PC-9 (cell line): ENCODE measurements at regions of chr11 and their contacts with region 1.

Region 1: GRCh38 chr11:34395916-34396550 is 38.2 kb upstream of the ABTB2 start:
- DNase-seq: peak; percentile 51 to 95
- H3K4me3 ChIP-seq: no peak overlapping the region
- H3K27ac ChIP-seq: peak overlapping the region; percentile 77
- H3K4me1 ChIP-seq: peaks cover 33% of the 10 kb centered on the region
- H3K27me3 ChIP-seq: no peaks in the 10 kb centered on the region
- CTCF ChIP-seq: no peak

Region 2: DNA sequence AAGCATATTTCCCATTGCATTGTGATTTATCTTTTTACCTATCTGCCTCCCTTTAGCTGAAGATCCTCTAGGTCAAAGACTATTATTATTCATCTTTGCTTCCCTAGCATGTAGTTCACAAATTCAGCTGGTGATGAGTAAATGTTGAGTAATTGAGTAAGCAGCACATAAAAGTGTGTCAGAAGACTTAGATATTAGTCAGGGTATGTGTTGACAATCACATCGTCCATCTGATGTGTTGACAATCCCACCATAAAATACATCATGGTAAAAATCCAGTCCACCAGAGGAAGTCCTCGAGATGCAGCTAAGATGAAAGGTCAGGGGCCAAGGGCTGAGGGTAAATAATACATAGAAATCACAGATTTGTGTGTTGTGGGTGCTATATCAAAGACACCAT is 15.3 kb before region 1 on chr11:
- CTCF ChIA-PET with region 1: interaction called, 13 read pairs
- POLR2A ChIA-PET with region 1: no interaction called
- intact Hi-C with region 1: no loop called
- DNase-seq: peak in 1 of 2 experiments; percentile 85
- H3K4me3 ChIP-seq: no peak overlapping the region
- H3K27ac ChIP-seq: peak overlapping the region; percentile 73; the same call in 1 of the 2 replicates
- H3K4me1 ChIP-seq: peaks cover 36% of the 10 kb centered on the region
- H3K27me3 ChIP-seq: no peaks in the 10 kb centered on the region
- CTCF ChIP-seq: no peak

Region 3: DNA sequence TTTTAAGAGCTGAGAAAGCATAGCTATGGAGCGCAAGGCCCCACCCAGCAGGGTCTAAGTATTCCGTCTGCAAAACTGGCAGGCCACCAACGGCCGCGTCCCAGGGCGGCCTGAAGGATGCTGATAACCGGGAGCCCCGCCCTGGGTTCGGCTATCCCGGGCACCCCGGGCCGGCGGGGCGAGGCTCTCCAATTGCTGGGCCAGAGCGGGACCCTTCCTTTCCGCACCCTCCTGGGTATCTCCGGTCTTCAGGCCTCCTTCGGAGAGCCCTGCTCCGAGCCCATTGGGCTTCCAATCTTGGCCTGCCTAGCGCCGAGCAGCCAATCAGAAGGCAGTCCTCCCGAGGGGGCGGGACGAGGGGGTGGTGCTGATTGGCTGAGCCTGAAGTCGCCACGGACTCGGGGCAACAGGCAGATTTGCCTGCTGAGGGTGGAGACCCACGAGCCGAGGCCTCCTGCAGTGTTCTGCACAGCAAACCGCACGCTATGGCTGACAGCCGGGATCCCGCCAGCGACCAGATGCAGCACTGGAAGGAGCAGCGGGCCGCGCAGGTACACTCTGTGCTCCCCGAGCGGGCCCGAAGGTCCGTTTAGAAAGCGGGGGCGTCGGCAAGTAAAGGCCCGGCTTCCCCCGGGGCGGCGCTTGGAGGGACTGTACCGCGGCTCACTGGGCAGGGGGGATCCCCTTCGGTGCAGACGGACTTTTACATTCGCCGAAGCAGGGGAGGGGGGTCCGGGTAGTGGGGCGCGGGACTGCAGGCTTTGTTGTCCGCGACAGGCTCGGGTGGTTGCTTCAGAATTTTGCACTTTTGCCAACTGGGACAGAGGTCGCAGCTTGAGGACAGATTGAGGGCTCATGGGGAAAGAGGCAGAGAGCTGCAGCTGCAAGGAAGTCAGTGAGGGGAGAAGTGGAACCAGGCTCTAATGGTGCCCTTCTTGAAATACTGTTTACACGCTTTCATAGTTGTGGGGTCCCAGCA is 42.8 kb after region 1 on chr11 and contains the start of gene CAT:
- CTCF ChIA-PET with region 1: no interaction called
- POLR2A ChIA-PET with region 1: interaction called, 3 read pairs
- intact Hi-C with region 1: loop called (anchors 5 kb)
- DNase-seq: peak; percentile 96 to 99
- H3K4me3 ChIP-seq: peak within 1 kb of the TSS; percentile 90
- H3K27ac ChIP-seq: peak within 1 kb of the TSS; percentile 54
- H3K4me1 ChIP-seq: peaks cover 20% of the 10 kb centered on the region
- H3K27me3 ChIP-seq: no peaks in the 10 kb centered on the region
- CTCF ChIP-seq: no peak
- total RNA-seq, gene CAT: 54.4 and 63.4 TPM in 2 replicates